ENCODE measurements at regions of chr19 and their contacts with region 1.

Region 1: GRCh38 chr19:7348587-7349230 is at the start of gene ARHGEF18:
- DNase-seq: peak; percentile 89
- ATAC-seq: peak; percentile 41
- H3K4me3 ChIP-seq: peak within 1 kb of the TSS; percentile 66 to 100 (median 97)
- H3K4me3 Mint-ChIP-seq: peak within 1 kb of the TSS; percentile 99
- H3K27ac ChIP-seq: peak within 1 kb of the TSS; percentile 96 to 99
- H3K27ac Mint-ChIP-seq: peak within 1 kb of the TSS; percentile 97
- H3K4me1 ChIP-seq: peaks cover 61 to 80% of the 10 kb centered on the region in 2 donors
- H3K4me1 Mint-ChIP-seq: peaks cover 79% of the 10 kb centered on the region
- H3K27me3 ChIP-seq: no peaks in the 10 kb centered on the region
- H3K27me3 Mint-ChIP-seq: no peaks in the 10 kb centered on the region
- CTCF ChIP-seq: no peak
- total RNA-seq, gene ARHGEF18: 86.8 and 94.9 TPM in 2 replicates

Region 2: GRCh38 chr19:7177926-7178325 is 170.8 kb before region 1 on chr19:
- CTCF ChIA-PET with region 1: interaction called, 4 read pairs
- POLR2A ChIA-PET with region 1: interaction called, 4 read pairs
- intact Hi-C with region 1: loop called (anchors 1 kb)
- DNase-seq: no peak
- ATAC-seq: no peak
- H3K4me3 ChIP-seq: no peak overlapping the region
- H3K4me3 Mint-ChIP-seq: no peak overlapping the region
- H3K27ac ChIP-seq: no peak overlapping the region
- H3K27ac Mint-ChIP-seq: peak overlapping the region; percentile 46
- H3K4me1 ChIP-seq: peaks cover 26 to 33% of the 10 kb centered on the region in 2 donors
- H3K4me1 Mint-ChIP-seq: peaks cover 40% of the 10 kb centered on the region
- H3K27me3 ChIP-seq: no peaks in the 10 kb centered on the region
- H3K27me3 Mint-ChIP-seq: peaks cover 5% of the 10 kb centered on the region
- CTCF ChIP-seq: no peak

Region 3: DNA sequence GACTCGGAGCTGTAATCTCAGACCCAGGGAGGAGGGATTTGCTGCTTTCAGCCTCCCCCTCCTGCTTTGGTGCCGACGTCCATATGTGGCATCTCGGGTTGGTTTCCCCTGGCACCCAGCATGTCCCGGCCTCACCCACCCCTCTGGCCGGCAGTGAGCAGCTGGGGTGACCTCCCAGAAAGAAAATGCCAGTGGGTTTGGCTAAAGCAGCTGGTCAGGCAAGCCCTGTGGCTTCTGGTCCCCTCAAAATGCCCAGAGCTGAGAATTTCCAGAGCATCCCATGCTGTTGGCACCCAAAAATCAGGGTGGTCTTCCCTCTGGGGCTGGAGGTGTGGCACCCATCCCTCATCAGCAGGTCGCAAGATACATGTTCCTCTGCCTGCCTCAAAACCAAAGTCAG is 88.5 kb before region 1 on chr19:
- CTCF ChIA-PET with region 1: no interaction called
- POLR2A ChIA-PET with region 1: interaction called, 19 read pairs
- intact Hi-C with region 1: no loop called
- DNase-seq: no peak
- ATAC-seq: no peak
- H3K4me3 ChIP-seq: no peak overlapping the region
- H3K4me3 Mint-ChIP-seq: no peak overlapping the region
- H3K27ac ChIP-seq: no peak overlapping the region
- H3K27ac Mint-ChIP-seq: no peak overlapping the region
- H3K4me1 ChIP-seq: no peaks in the 10 kb centered on the region
- H3K4me1 Mint-ChIP-seq: no peaks in the 10 kb centered on the region
- H3K27me3 ChIP-seq: no peaks in the 10 kb centered on the region
- H3K27me3 Mint-ChIP-seq: no peaks in the 10 kb centered on the region
- CTCF ChIP-seq: no peak

Region 4: GRCh38 chr19:7382694-7383093 is 34.0 kb after region 1 on chr19:
- CTCF ChIA-PET with region 1: interaction called, 57 read pairs
- POLR2A ChIA-PET with region 1: no interaction called
- intact Hi-C with region 1: no loop called
- DNase-seq: no peak
- ATAC-seq: no peak
- H3K4me3 ChIP-seq: no peak overlapping the region
- H3K4me3 Mint-ChIP-seq: no peak overlapping the region
- H3K27ac ChIP-seq: peak overlapping the region in 1 of 2 donors; percentile 52
- H3K27ac Mint-ChIP-seq: peak overlapping the region; percentile 37
- H3K4me1 ChIP-seq: peaks cover 0 to 12% of the 10 kb centered on the region in 2 donors
- H3K4me1 Mint-ChIP-seq: peaks cover 20% of the 10 kb centered on the region
- H3K27me3 ChIP-seq: no peaks in the 10 kb centered on the region
- H3K27me3 Mint-ChIP-seq: no peaks in the 10 kb centered on the region
- CTCF ChIP-seq: no peak

Region 5: GRCh38 chr19:7394731-7395359 is 46.1 kb after region 1 on chr19:
- CTCF ChIA-PET with region 1: interaction called, 8 read pairs
- POLR2A ChIA-PET with region 1: interaction called, 5 read pairs
- intact Hi-C with region 1: loop called (anchors 5 kb)
- DNase-seq: peak; percentile 90
- ATAC-seq: peak; percentile 84
- H3K4me3 ChIP-seq: peak overlapping the region in 4 of 5 experiments; percentile 36 to 67 (median 60)
- H3K4me3 Mint-ChIP-seq: peak overlapping the region; percentile 91
- H3K27ac ChIP-seq: peak overlapping the region; percentile 30 to 82
- H3K27ac Mint-ChIP-seq: peak overlapping the region; percentile 84
- H3K4me1 ChIP-seq: peaks cover 40 to 44% of the 10 kb centered on the region in 2 donors
- H3K4me1 Mint-ChIP-seq: peaks cover 43% of the 10 kb centered on the region
- H3K27me3 ChIP-seq: no peaks in the 10 kb centered on the region
- H3K27me3 Mint-ChIP-seq: no peaks in the 10 kb centered on the region
- CTCF ChIP-seq: no peak